ENCODE measurements at regions of chr20 and their contacts with region 1.

Region 1: DNA sequence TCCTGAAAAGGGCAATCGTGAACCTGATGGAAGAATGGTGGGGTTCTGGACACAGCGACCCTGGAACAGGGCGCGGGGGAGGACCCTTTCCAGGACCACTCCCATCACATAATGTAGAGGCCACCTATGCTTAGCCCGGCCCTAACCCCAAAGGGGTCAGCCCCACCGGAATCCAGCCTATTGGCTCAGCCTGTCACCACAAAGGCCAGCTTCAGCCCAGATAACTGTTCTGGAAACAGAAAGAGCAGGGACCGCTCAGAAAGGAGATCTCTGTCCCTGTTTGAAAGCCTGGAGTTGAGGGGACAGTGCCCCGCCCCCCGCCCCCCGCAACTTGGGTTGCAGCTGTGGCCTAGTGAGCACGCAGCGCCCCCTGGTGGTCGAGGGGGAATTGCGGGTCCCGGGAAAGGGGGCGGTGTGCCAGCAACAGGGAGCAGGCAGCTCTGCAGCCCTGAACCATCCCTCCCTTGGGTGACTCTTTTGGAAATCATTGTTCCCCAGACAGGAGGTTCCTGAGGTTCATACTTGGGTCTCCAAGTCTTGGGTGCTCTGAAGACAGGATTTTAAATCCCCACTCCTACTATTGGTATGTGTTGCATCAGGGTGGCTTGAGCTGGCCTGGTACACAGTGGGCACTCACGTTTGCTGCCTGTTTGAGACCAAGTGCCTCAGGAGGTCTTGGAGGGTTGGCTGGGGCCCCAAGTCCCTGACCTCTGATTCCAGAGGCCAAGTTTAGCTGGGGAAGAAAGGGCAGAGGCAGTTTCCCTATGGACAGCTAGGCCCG is 1.5 kb downstream of the SIGLEC1 start:
- DNase-seq: peak; percentile 86
- ATAC-seq: peak; percentile 86
- H3K4me3 Mint-ChIP-seq: no peak overlapping the region
- H3K27ac Mint-ChIP-seq: no peak overlapping the region
- H3K4me1 Mint-ChIP-seq: no peaks in the 10 kb centered on the region
- H3K27me3 Mint-ChIP-seq: peaks cover 1% of the 10 kb centered on the region
- CTCF ChIP-seq: peak; percentile 96

Region 2: GRCh38 chr20:3672547-3673171 is 38.2 kb before region 1 on chr20:
- CTCF ChIA-PET with region 1: interaction called, 79 read pairs
- POLR2A ChIA-PET with region 1: interaction called, 4 read pairs
- intact Hi-C with region 1: loop called (anchors 5 kb)
- DNase-seq: peak; percentile 23
- ATAC-seq: peak; percentile 28
- H3K4me3 Mint-ChIP-seq: no peak overlapping the region
- H3K27ac Mint-ChIP-seq: no peak overlapping the region
- H3K4me1 Mint-ChIP-seq: peaks cover 2% of the 10 kb centered on the region
- H3K27me3 Mint-ChIP-seq: peaks cover 43% of the 10 kb centered on the region
- CTCF ChIP-seq: no peak

Region 3: DNA sequence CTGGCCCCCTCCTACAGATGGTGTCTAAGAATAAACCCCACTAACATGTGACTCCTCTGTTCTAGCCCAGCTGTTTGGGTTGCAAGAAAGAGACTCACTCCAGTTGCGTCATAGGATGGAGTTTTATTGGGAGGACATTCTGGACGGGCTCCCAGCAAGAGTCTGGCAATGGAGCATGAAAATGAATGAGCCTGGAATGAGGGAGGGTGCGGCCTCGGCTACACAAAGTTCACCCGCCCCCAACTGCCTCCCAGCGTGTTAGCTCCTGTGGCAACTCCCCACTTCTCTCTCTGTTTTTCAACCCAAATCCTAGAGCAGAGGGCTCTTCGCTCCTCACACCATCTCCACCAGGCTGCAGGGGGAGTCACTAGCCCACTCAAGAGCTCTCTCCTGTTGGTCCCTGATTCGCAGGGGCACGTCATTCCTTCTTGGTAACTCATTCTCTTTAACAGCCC is 24.0 kb before region 1 on chr20:
- CTCF ChIA-PET with region 1: interaction called, 25 read pairs
- POLR2A ChIA-PET with region 1: no interaction called
- intact Hi-C with region 1: no loop called
- DNase-seq: no peak
- ATAC-seq: no peak
- H3K4me3 Mint-ChIP-seq: no peak overlapping the region
- H3K27ac Mint-ChIP-seq: no peak overlapping the region
- H3K4me1 Mint-ChIP-seq: no peaks in the 10 kb centered on the region
- H3K27me3 Mint-ChIP-seq: peaks cover 14% of the 10 kb centered on the region
- CTCF ChIP-seq: no peak

Region 4: DNA sequence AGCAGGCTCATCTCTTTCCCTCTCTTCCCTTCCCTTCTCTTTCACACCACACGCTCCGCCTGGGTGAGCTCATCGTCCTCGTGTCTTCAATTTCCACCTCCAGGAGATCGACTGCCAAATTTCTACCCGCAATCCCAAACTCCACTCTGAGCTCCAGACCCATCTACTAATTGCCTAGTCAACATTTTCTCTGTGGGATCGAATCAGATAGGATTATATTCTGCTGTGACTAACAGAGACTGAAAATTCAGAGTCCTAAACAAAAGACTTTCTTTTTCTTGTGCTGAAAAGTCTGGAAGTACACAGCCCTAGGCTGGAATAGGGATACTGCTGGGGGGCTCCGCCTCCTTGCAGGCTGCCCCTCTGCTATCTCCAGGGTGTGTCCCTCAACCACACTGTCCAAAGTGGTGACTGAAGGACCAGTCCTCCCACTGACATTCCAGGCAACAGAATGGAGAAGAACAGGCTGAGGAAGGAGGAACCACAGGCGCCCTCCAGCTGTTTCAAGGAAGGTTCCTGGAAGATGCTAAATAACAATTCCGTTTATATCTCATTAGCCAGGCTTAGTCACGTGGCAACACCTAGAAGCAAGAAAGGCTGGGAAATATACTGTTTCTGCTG is 16.6 kb after region 1 on chr20:
- CTCF ChIA-PET with region 1: interaction called, 13 read pairs
- POLR2A ChIA-PET with region 1: no interaction called
- intact Hi-C with region 1: no loop called
- DNase-seq: no peak
- ATAC-seq: no peak
- H3K4me3 Mint-ChIP-seq: no peak overlapping the region
- H3K27ac Mint-ChIP-seq: no peak overlapping the region
- H3K4me1 Mint-ChIP-seq: no peaks in the 10 kb centered on the region
- H3K27me3 Mint-ChIP-seq: peaks cover 35% of the 10 kb centered on the region
- CTCF ChIP-seq: no peak

Region 5: DNA sequence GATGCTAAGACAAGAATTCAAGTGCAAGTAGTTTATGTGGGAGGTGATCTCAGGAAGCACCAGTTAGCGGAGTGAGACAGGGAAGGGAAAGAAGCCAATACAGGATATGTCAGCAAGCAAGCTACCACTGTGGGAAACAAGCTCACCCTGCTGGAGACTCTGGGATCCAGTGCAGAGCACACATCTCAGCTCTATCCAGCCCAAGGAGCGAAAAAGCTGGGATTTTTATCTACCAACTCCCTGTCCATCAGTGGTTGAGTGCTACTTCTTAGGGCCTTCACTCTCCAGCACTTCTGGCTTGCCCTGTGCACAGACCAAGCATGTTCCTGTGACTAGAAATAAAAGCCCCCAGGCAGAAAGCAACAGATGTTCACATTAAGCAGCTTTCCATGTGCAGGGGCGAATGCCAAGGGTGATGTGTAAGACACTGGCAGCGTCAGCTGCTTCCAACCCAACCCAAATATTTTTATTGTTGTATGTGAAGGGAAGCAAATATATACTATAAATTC is 315.3 kb after region 1 on chr20:
- CTCF ChIA-PET with region 1: no interaction called
- POLR2A ChIA-PET with region 1: no interaction called
- intact Hi-C with region 1: no loop called
- DNase-seq: no peak
- ATAC-seq: no peak
- H3K4me3 Mint-ChIP-seq: no peak overlapping the region
- H3K27ac Mint-ChIP-seq: no peak overlapping the region
- H3K4me1 Mint-ChIP-seq: no peaks in the 10 kb centered on the region
- H3K27me3 Mint-ChIP-seq: no peaks in the 10 kb centered on the region
- CTCF ChIP-seq: no peak